Activated naive CD4-positive, alpha-beta T cell treated with anti-CD3 and anti-CD28 coated beads, Interleukin-2, amount 10 ng/mL, durations not matched to agents 7 days and 5 days (primary cell): ENCODE measurements at regions of chr11 and their contacts with region 1.

Region 1: GRCh38 chr11:117107701-117108590 is 9.7 kb upstream of the SIK3 start:
- DNase-seq: no peak
- H3K4me3 Mint-ChIP-seq: no peak overlapping the region
- H3K27ac Mint-ChIP-seq: no peak overlapping the region
- H3K4me1 Mint-ChIP-seq: peaks cover 4% of the 10 kb centered on the region
- H3K27me3 Mint-ChIP-seq: peaks cover 5% of the 10 kb centered on the region

Region 2: DNA sequence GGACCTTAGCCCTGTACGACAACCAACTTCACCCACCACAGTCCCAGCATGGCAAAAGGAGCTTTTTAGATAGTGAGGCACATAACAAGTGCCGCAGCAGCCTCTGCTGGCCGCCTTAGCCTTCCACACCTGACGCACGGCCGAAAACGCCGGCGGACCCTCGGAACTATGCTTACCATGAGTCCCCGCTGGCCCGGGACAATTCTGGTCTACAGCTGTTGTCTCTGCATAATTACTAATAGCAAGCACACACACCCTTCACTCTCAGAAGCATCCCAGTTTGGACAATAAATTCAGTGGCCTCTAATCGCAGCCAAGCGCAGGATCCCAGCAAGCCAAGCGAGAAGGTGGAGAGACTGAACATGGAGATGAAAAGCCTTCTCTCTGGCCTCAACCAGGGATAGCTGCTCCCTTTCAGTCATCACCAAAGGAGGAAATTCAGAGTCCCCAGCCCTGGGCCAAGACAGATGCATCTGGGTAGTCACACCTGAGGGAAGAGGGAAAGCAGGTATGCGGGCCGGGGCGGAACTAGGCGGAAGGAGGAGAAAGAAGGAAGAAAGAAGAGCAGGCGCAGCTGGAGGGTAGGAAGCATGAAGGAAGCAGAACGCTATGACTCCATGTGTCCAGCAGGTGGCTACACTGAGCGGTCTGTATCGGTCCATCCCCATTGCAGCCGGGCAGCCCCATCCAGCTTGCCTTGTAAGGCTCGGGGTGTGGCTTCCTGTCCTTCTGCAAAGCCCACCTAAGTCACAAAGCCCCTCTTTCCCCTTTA is 375.5 kb before region 1 on chr11:
- CTCF ChIA-PET with region 1: interaction called, 18 read pairs
- DNase-seq: peak; percentile 72
- H3K4me3 Mint-ChIP-seq: no peak overlapping the region
- H3K27ac Mint-ChIP-seq: no peak overlapping the region
- H3K4me1 Mint-ChIP-seq: peaks cover 3% of the 10 kb centered on the region
- H3K27me3 Mint-ChIP-seq: peaks cover 11% of the 10 kb centered on the region

Region 3: DNA sequence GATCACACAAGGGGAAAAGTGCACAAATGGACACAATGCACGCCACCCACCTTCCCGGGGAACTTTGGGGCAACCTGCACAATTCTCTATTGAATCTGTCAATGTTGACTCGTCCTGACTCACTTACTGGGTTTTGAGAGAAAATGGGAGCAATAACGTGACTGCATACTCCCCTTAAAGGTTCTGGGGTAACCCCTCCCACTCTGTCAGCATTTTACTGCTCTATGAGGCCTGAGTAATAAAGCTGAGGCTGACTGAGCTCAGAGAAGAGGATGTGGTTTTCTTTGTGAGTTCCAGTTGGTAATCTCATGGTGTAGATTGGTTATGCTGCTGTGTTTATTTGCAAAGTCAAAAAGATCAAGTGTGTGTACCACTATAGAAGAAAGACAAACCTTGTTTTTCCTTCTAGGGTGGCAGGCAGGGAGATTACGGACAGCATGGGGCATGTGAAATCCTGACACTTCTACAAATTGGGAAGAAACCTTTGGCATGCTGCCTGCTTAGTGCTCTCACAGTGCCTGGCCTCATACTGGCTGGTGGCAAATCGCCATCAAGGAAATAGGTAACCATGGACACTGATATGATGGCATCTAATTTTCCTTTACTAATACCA is 254.4 kb before region 1 on chr11:
- CTCF ChIA-PET with region 1: interaction called, 14 read pairs
- DNase-seq: peak; percentile 73
- H3K4me3 Mint-ChIP-seq: peak overlapping the region; percentile 2
- H3K27ac Mint-ChIP-seq: peak overlapping the region; percentile 96
- H3K4me1 Mint-ChIP-seq: peaks cover 74% of the 10 kb centered on the region
- H3K27me3 Mint-ChIP-seq: no peaks in the 10 kb centered on the region

Region 4: GRCh38 chr11:116879800-116880625 is 227.9 kb before region 1 on chr11:
- CTCF ChIA-PET with region 1: interaction called, 54 read pairs
- DNase-seq: peak; percentile 38
- H3K4me3 Mint-ChIP-seq: no peak overlapping the region
- H3K27ac Mint-ChIP-seq: no peak overlapping the region
- H3K4me1 Mint-ChIP-seq: peaks cover 3% of the 10 kb centered on the region
- H3K27me3 Mint-ChIP-seq: no peaks in the 10 kb centered on the region

Region 5: GRCh38 chr11:116938471-116939070 is 169.4 kb before region 1 on chr11:
- CTCF ChIA-PET with region 1: no interaction called
- DNase-seq: no peak
- H3K4me3 Mint-ChIP-seq: no peak overlapping the region
- H3K27ac Mint-ChIP-seq: no peak overlapping the region
- H3K4me1 Mint-ChIP-seq: peaks cover 7% of the 10 kb centered on the region
- H3K27me3 Mint-ChIP-seq: no peaks in the 10 kb centered on the region

Region 6: GRCh38 chr11:117160826-117161225 is 52.9 kb after region 1 on chr11:
- CTCF ChIA-PET with region 1: no interaction called
- DNase-seq: no peak
- H3K4me3 Mint-ChIP-seq: no peak overlapping the region
- H3K27ac Mint-ChIP-seq: peak overlapping the region; percentile 49
- H3K4me1 Mint-ChIP-seq: no peaks in the 10 kb centered on the region
- H3K27me3 Mint-ChIP-seq: no peaks in the 10 kb centered on the region